ENCODE measurements at regions of chr11 and their contacts with region 1.

Region 1: DNA sequence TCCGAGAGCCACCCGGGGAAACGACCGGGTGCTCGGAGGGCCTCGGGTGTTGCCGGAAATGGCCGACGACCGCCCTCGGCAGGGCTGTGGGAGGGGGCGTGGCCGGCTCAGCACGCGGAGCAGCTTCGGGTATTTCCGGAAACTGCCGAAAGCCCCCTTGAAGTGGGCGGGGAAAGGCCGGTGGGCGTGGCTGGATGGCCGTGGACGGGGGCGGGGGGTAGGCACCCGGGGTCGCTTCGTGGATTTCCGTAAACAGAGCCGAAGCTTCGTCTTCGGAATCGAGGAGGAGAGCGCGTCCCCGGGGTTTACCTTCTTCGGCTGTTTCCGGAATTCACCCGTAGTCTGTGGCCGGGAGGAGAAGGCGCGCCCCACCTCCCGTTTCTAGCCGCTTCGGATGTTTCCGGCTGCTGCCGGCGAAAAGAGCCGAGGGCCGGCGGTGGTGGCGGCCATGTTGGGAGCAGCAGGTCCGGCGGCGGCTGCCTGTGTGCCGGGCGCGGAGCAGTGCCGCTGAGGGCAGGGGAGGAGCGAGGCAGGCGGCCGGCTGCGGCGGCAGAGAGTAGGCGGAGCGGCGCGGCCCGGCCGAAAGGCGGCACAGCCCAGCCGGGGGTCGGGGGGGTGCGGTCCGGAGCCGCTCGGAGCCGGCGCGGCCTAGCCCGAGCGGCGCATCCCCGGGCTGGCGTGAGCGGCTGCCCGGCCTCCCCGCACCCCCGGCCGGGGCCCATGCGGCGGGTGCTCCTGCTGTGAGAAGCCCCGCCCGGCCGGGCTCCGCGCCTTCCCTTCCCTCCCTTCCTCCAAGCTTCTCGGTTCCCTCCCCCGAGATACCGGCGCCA is at the start of gene MARK2:
- DNase-seq: peak; percentile 99
- H3K4me3 ChIP-seq: peak within 1 kb of the TSS; percentile 97
- H3K27ac ChIP-seq: peak within 1 kb of the TSS; percentile 84
- H3K4me1 ChIP-seq: peaks cover 42% of the 10 kb centered on the region
- CTCF ChIP-seq: no peak
- total RNA-seq, gene MARK2: 20.8 and 22.7 TPM in 2 replicates

Region 2: GRCh38 chr11:62223095-62223494 is 1615.8 kb before region 1 on chr11:
- CTCF ChIA-PET with region 1: no interaction called
- POLR2A ChIA-PET with region 1: no interaction called
- intact Hi-C with region 1: no loop called
- DNase-seq: no peak
- H3K4me3 ChIP-seq: no peak overlapping the region
- H3K27ac ChIP-seq: no peak overlapping the region
- H3K4me1 ChIP-seq: no peaks in the 10 kb centered on the region
- CTCF ChIP-seq: no peak

Region 3: GRCh38 chr11:63768237-63769043 is 70.5 kb before region 1 on chr11 and contains the start of gene ZFTA:
- CTCF ChIA-PET with region 1: no interaction called
- POLR2A ChIA-PET with region 1: no interaction called
- intact Hi-C with region 1: loop called (anchors 5 kb)
- DNase-seq: peak; percentile 84
- H3K4me3 ChIP-seq: peak within 1 kb of the TSS; percentile 91
- H3K27ac ChIP-seq: peak within 1 kb of the TSS; percentile 52
- H3K4me1 ChIP-seq: peaks cover 20% of the 10 kb centered on the region
- CTCF ChIP-seq: peak; percentile 52
- total RNA-seq, gene ZFTA: 6.8 and 10.3 TPM in 2 replicates

Region 4: GRCh38 chr11:63906585-63906984 is 67.7 kb after region 1 on chr11:
- CTCF ChIA-PET with region 1: interaction called, 10 read pairs
- POLR2A ChIA-PET with region 1: no interaction called
- intact Hi-C with region 1: loop called (anchors 1 kb)
- DNase-seq: peak; percentile 47
- H3K4me3 ChIP-seq: no peak overlapping the region
- H3K27ac ChIP-seq: no peak overlapping the region
- H3K4me1 ChIP-seq: no peaks in the 10 kb centered on the region
- CTCF ChIP-seq: peak; percentile 63

Region 5: DNA sequence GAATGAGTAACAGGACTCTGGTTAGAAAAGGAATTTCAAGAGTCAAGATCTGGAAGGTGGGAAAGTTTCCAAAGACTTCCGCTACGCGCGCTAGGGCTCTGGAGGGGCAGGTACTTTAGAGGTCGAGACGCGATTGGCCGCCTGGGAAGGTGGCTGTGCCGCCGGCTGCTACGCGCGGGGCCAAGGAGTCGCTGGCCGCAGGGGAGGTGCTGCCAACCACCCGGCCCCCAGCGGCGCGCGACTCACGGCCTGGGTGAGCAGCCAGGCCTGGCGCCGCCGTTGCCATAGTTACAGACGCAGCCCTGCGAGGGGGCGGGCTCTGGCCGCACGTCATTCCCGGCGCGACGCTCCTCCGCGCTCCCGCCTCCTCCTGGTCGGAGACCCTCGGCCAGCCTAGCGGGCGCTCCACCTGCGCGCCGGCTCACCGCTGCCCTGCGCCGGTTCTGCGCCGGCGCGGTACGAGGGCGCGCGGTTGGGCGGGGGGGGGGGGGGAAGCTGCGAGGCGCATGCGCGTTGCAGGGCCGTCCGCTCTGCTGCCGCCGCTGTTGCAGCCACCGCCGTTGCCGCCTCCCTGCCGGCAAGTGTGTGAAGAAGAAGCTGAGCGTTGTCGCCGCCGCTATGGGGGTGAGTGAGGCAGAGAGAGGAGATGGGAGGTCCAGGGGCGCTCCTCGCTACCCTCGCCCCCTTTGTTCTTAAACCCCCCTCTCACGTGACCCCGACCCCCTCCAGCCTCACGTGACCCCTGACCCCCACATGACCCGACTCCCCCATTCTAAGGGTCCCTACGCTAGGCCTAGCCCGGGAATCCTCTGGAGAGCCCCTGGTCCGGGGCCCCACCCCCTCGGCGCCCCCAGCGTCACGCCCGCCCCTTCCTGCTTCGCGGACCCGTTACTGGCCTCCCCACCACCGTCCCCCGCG is 99.8 kb after region 1 on chr11 and contains the start of gene NAA40:
- CTCF ChIA-PET with region 1: no interaction called
- POLR2A ChIA-PET with region 1: interaction called, 4 read pairs
- intact Hi-C with region 1: loop called (anchors 2 kb)
- DNase-seq: peak; percentile 99
- H3K4me3 ChIP-seq: peak within 1 kb of the TSS; percentile 98
- H3K27ac ChIP-seq: peak within 1 kb of the TSS; percentile 84
- H3K4me1 ChIP-seq: peaks cover 24% of the 10 kb centered on the region
- CTCF ChIP-seq: no peak
- total RNA-seq, gene NAA40: 24.5 and 34.5 TPM in 2 replicates

Region 6: GRCh38 chr11:63974259-63975143 is 135.6 kb after region 1 on chr11 and contains the start of gene COX8A:
- CTCF ChIA-PET with region 1: no interaction called
- POLR2A ChIA-PET with region 1: no interaction called
- intact Hi-C with region 1: loop called (anchors 1 kb)
- DNase-seq: peak; percentile 100
- H3K4me3 ChIP-seq: peak within 1 kb of the TSS; percentile 89
- H3K27ac ChIP-seq: peak within 1 kb of the TSS; percentile 73
- H3K4me1 ChIP-seq: peaks cover 15% of the 10 kb centered on the region
- CTCF ChIP-seq: no peak
- total RNA-seq, gene COX8A: 523 and 811 TPM in 2 replicates

Measured in OCI-LY7 (cell line).